ENCODE measurements at regions of chr15 and their contacts with region 1.

Region 1: DNA sequence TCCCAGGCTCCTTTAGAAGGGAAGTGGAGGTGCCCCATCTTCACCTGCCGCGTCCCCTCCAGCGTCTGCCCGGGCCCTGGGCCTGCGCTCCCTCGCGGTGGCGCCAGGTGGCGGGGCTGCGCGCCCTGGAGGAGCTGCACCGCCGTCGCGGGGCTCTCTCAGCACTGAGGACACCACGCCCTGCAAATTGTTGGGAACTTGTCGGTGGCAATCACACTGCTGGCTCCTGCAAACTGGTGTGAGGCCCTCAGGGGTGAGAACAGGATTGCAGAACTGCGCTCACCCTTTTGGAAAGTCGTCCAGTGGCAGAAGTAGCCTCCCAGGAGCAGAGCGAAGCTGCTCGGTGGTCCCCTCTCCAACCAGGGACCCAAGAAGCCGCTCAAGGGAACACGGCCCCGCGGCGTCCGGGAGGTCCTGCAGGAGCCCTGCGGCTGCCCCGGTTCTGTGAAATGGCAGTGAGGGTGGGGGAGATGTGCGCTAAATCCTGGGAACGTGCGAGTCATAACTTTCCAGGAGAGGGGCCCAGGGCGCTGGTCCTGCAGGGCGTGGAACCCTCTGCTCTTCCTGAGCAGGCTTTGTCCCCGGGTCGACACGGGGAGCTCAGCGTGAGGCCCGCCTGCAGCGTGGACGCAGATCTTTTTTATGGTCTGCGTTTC is 995 bp upstream of the LRRK1 start:
- DNase-seq: peak; percentile 59 to 83 (median 76)
- H3K4me3 ChIP-seq: peak overlapping the region; percentile 50
- H3K27ac ChIP-seq: peak overlapping the region in 1 of 2 donors; percentile 83
- H3K4me1 ChIP-seq: peaks cover 5% of the 10 kb centered on the region
- H3K27me3 ChIP-seq: no peaks in the 10 kb centered on the region
- CTCF ChIP-seq: peak; percentile 79 to 89 (median 88)
- EP300 ChIP-seq: no peak
- POLR2A ChIP-seq: no peak

Region 2: DNA sequence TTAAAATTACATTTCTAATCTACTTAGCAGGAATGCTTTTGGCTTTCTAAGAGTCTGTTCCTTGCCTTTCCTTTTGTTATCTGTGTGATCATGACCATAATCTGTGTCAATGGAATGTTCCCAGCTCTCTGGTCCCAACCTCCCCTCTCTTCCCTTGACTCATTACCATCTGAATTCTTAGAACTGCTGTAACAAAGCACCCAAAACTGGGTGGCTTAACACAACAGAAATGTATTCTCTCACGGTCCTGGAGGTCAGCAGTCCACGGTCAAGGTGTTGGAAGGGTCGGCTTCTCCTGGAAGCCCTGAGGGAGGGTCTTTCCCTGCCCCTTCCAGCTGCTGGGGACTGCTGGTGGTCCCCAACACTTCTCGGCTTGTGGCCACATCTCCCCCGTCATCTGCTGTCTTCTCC is 82.1 kb after region 1 on chr15:
- intact Hi-C with region 1: loop called in 2 of 4 experiments (anchors 5 kb)
- DNase-seq: no peak
- H3K4me3 ChIP-seq: no peak overlapping the region
- H3K27ac ChIP-seq: no peak overlapping the region
- H3K4me1 ChIP-seq: no peaks in the 10 kb centered on the region
- H3K27me3 ChIP-seq: no peaks in the 10 kb centered on the region
- CTCF ChIP-seq: no peak
- EP300 ChIP-seq: no peak
- POLR2A ChIP-seq: no peak

Region 3: DNA sequence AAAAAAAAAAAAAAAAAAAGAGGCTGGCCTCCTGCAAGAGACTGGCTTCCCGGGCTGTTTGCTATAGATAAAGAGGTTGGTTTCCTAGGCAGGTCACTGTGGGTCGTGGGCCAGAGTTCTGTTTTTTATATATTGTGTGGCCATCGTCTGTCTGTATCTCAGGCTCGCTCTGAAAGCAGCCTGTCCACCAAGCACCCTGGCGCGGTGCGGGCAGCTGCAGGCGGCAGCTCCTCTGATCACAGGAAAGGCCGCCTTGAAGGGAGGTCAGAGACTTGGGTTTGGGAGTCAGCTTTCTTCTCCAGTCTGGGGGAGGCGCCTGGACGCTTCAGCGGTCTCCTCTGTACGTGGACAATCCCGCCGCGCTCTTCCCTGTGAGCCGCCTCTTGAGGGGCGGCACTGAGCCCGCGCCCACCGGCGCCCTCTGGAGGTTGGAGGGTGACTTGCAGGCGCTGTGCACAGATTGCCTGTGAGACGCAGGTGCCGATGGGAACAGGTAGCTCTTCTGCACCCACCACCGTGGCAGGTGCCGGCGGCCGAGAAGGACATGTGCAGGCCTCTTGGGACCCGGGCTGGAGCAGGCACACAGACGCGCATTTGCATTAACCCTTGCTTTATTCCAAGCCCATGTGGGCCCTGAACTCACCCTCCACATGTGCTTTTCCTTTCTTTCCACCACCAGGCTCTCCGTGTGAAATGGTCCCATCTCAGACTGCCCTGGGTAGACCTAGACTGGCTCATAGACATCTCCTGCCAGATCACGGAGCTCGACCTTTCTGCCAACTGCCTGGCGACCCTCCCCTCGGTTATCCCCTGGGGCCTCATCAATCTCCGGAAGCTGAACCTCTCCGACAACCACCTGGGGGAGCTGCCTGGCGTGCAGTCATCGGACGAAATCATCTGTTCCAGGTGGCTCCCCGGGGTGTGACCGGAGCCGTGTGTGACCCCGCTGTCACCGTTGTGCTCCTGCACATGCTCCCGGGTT is 90.3 kb after region 1 on chr15:
- intact Hi-C with region 1: loop called in 3 of 4 experiments (anchors 1 to 5 kb)
- DNase-seq: peak; percentile 72 to 90 (median 82)
- H3K4me3 ChIP-seq: peak overlapping the region; percentile 33
- H3K27ac ChIP-seq: no peak overlapping the region
- H3K4me1 ChIP-seq: peaks cover 2% of the 10 kb centered on the region
- H3K27me3 ChIP-seq: no peaks in the 10 kb centered on the region
- CTCF ChIP-seq: peak; percentile 80 to 95 (median 83)
- EP300 ChIP-seq: no peak
- POLR2A ChIP-seq: no peak

Region 4: GRCh38 chr15:101201406-101202174 is 283.4 kb after region 1 on chr15:
- intact Hi-C with region 1: no loop called
- DNase-seq: peak; percentile 86 to 93 (median 90)
- H3K4me3 ChIP-seq: no peak overlapping the region
- H3K27ac ChIP-seq: peak overlapping the region in 1 of 2 donors; percentile 51
- H3K4me1 ChIP-seq: peaks cover 30% of the 10 kb centered on the region
- H3K27me3 ChIP-seq: no peaks in the 10 kb centered on the region
- CTCF ChIP-seq: no peak
- EP300 ChIP-seq: no peak
- POLR2A ChIP-seq: no peak